ENCODE measurements at regions of chr13 and their contacts with region 1.

Region 1: DNA sequence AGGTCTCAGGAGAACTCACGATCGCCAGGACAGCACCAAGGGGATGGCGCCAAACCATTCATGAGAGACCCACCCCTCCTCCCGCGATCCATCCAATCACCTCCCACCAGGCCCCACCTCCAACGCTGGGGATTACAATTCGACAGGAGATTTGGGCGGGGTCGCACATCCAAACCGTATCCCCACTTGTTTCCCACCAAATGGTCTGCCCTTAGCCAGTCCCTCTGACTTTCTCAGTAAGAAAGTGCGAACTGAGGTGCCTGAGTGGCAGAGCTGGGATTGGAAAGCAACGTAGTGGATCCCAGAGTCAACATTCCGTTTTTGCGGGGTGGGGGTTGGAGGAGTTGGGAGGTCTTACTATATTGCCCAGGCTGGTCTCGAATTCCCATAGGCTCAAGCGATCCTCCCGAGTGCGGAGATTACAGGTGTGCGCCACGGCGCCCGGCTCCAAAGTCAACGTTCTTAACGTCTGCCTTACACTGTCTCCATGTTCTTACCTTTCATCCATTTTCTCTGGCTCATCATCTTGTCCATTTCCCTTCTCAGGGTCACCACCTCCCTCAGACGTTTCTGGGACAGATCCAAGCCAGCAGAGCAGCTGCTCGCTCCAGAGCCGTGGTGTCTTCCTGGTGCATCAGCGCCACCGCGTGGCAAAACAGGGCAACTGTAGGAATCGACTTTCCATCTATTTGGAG is 102.7 kb upstream of the ABCC4 start:
- DNase-seq: peak; percentile 84
- H3K4me3 Mint-ChIP-seq: peak overlapping the region; percentile 79
- H3K27ac Mint-ChIP-seq: no peak overlapping the region
- H3K4me1 Mint-ChIP-seq: peaks cover 5% of the 10 kb centered on the region
- H3K27me3 Mint-ChIP-seq: peaks cover 6% of the 10 kb centered on the region

Region 2: GRCh38 chr13:94435604-94436226 is 968.3 kb before region 1 on chr13:
- CTCF ChIA-PET with region 1: interaction called, 3 read pairs
- POLR2A ChIA-PET with region 1: no interaction called
- intact Hi-C with region 1: loop called (anchors 10 kb)
- DNase-seq: no peak
- H3K4me3 Mint-ChIP-seq: no peak overlapping the region
- H3K27ac Mint-ChIP-seq: no peak overlapping the region
- H3K4me1 Mint-ChIP-seq: peaks cover 17% of the 10 kb centered on the region
- H3K27me3 Mint-ChIP-seq: peaks cover 3% of the 10 kb centered on the region

Region 3: DNA sequence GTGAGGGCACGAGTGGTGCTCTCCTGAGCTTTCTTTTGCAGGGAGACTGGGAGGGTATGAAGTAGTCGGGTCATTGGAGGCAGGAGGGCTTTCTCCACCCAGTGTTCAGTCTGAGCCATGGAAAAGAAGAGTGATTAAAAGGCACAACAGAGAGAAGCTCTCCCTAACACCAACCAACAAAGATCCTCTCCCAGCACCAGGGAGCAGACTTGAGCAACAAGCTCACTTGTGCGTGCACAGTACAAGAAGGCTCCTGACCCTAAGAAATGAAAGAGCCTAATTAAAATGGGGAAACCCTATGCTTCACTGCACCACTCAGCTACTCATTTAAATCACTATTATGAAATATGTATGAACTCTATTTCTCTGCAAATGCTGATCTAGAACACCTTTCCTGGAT is 415.3 kb before region 1 on chr13:
- CTCF ChIA-PET with region 1: interaction called, 7 read pairs
- POLR2A ChIA-PET with region 1: no interaction called
- intact Hi-C with region 1: loop called (anchors 10 kb)
- DNase-seq: no peak
- H3K4me3 Mint-ChIP-seq: no peak overlapping the region
- H3K27ac Mint-ChIP-seq: no peak overlapping the region
- H3K4me1 Mint-ChIP-seq: no peaks in the 10 kb centered on the region
- H3K27me3 Mint-ChIP-seq: peaks cover 12% of the 10 kb centered on the region

Region 4: GRCh38 chr13:95191821-95192563 is 212.0 kb before region 1 on chr13:
- CTCF ChIA-PET with region 1: interaction called, 233 read pairs
- POLR2A ChIA-PET with region 1: no interaction called
- intact Hi-C with region 1: loop called (anchors 1 kb)
- DNase-seq: peak; percentile 78
- H3K4me3 Mint-ChIP-seq: no peak overlapping the region
- H3K27ac Mint-ChIP-seq: no peak overlapping the region
- H3K4me1 Mint-ChIP-seq: peaks cover 9% of the 10 kb centered on the region
- H3K27me3 Mint-ChIP-seq: no peaks in the 10 kb centered on the region

Region 5: GRCh38 chr13:95264225-95264624 is 139.8 kb before region 1 on chr13:
- CTCF ChIA-PET with region 1: no interaction called
- POLR2A ChIA-PET with region 1: no interaction called
- intact Hi-C with region 1: no loop called
- DNase-seq: no peak
- H3K4me3 Mint-ChIP-seq: no peak overlapping the region
- H3K27ac Mint-ChIP-seq: no peak overlapping the region
- H3K4me1 Mint-ChIP-seq: peaks cover 2% of the 10 kb centered on the region
- H3K27me3 Mint-ChIP-seq: no peaks in the 10 kb centered on the region

Region 6: GRCh38 chr13:95301183-95301967 is 102.6 kb before region 1 on chr13 and contains the start of gene ABCC4:
- CTCF ChIA-PET with region 1: interaction called, 22 read pairs
- POLR2A ChIA-PET with region 1: no interaction called
- intact Hi-C with region 1: loop called (anchors 1 kb)
- DNase-seq: peak; percentile 67
- H3K4me3 Mint-ChIP-seq: peak within 1 kb of the TSS; percentile 75
- H3K27ac Mint-ChIP-seq: peak within 1 kb of the TSS; percentile 5
- H3K4me1 Mint-ChIP-seq: peaks cover 32% of the 10 kb centered on the region
- H3K27me3 Mint-ChIP-seq: no peaks in the 10 kb centered on the region
- total RNA-seq, gene ABCC4: 6.9 to 8.7 TPM

Region 7: GRCh38 chr13:95387733-95388207 is 16.2 kb before region 1 on chr13:
- CTCF ChIA-PET with region 1: interaction called, 12 read pairs
- POLR2A ChIA-PET with region 1: no interaction called
- intact Hi-C with region 1: no loop called
- DNase-seq: no peak
- H3K4me3 Mint-ChIP-seq: no peak overlapping the region
- H3K27ac Mint-ChIP-seq: no peak overlapping the region
- H3K4me1 Mint-ChIP-seq: peaks cover 2% of the 10 kb centered on the region
- H3K27me3 Mint-ChIP-seq: peaks cover 18% of the 10 kb centered on the region

Region 8: DNA sequence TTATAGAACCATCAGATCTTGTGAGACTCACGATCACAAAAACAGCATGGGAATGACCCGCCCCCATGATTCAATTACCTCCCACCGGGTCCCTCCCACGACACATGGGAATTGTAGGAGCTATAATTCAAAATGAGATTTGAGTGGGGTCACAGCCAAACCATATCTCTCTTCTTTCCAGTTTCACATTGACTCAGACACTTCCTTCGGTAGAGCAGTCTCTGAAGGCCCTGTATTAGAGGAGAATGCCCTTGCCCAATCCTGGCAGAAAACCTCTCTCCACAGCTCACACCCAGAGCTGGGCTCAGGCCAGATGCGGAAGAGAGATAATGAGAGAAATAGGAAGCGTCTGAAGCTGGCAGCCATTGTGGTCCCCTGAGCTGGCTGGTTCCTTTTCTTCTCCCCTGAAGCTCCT is 76.2 kb after region 1 on chr13:
- CTCF ChIA-PET with region 1: interaction called, 13 read pairs
- POLR2A ChIA-PET with region 1: no interaction called
- intact Hi-C with region 1: loop called (anchors 1 kb)
- DNase-seq: peak; percentile 54
- H3K4me3 Mint-ChIP-seq: no peak overlapping the region
- H3K27ac Mint-ChIP-seq: no peak overlapping the region
- H3K4me1 Mint-ChIP-seq: peaks cover 9% of the 10 kb centered on the region
- H3K27me3 Mint-ChIP-seq: peaks cover 1% of the 10 kb centered on the region

Measured in activated CD4-positive, alpha-beta memory T cell treated with anti-CD3 and anti-CD28 coated beads for 36 hours (primary cell).